B cell (primary cell): ENCODE measurements at regions of chr1 and their contacts with region 1.

Region 1: DNA sequence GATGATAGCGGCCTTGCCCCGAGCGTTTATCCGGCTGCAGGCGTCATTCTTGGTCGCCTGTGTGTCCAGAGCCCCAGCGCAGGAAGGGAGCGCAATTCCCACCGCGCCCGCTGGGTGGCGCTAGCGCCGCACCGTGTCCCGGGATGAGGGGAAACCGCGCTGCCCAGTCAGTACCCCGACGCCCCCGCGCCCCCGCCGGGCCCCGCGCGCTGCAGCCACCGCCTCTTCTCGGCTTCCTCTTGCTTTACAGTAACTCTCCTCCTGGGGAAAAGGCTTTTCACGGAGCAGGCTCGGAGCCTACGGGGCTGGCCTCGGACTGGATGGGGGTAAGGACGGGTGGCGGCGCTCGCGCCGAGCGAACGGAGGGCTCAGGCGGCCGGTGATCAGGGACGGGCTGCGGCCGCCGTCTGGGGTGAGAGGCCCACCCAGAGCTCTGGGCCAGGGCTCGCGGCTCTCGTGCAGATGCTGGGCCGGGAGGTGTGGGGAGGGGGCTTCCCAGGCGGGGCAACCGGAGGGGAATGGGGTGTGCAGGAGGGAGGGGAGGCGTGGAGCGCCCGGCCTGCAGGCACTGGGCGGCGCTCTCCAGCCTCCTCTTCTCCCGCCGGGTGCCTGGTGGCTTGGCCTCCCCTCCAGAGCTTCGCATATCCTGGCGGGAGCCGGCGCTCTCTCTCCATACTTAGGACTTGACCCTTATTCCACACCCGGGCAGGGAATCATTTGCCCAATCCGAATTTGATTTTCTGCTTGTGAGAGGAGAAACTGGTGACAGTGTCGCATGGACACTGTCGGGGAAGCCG is 29.8 kb downstream of the TEX35 start:
- DNase-seq: peak; percentile 93
- ATAC-seq: peak; percentile 80
- H3K4me3 ChIP-seq: peak overlapping the region; percentile 84 to 90 (median 88)
- H3K4me3 Mint-ChIP-seq: peak overlapping the region; percentile 99
- H3K27ac ChIP-seq: peak overlapping the region; percentile 55 to 61
- H3K27ac Mint-ChIP-seq: peak overlapping the region; percentile 98
- H3K4me1 ChIP-seq: peaks cover 36 to 46% of the 10 kb centered on the region in 2 donors
- H3K4me1 Mint-ChIP-seq: peaks cover 50% of the 10 kb centered on the region
- H3K27me3 ChIP-seq: no peaks in the 10 kb centered on the region
- H3K27me3 Mint-ChIP-seq: no peaks in the 10 kb centered on the region
- CTCF ChIP-seq: peak; percentile 99

Region 2: DNA sequence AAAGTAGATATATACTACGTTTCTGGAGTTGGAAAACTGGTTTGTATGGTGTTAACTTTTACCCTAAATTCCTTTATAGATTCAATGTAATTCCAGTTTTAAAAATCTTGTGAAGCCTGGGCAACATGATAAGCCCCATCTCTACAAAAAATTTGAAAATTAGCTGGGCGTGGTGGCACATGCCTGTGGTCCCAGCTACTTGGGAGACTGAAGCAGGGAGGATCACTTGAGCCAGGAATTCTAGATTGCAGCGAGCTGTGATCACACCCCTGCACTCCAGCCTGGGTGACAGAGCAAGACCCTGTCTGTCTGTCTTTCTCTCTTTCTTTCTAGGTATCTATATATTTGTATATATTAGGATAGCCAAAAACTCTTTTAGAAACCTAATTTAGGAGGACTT is 187.9 kb before region 1 on chr1:
- CTCF ChIA-PET with region 1: no interaction called
- POLR2A ChIA-PET with region 1: no interaction called
- intact Hi-C with region 1: no loop called
- DNase-seq: no peak
- ATAC-seq: no peak
- H3K4me3 ChIP-seq: no peak overlapping the region
- H3K4me3 Mint-ChIP-seq: no peak overlapping the region
- H3K27ac ChIP-seq: no peak overlapping the region
- H3K27ac Mint-ChIP-seq: no peak overlapping the region
- H3K4me1 ChIP-seq: no peaks in the 10 kb centered on the region
- H3K4me1 Mint-ChIP-seq: no peaks in the 10 kb centered on the region
- H3K27me3 ChIP-seq: no peaks in the 10 kb centered on the region
- H3K27me3 Mint-ChIP-seq: peaks cover 7% of the 10 kb centered on the region
- CTCF ChIP-seq: no peak

Region 3: DNA sequence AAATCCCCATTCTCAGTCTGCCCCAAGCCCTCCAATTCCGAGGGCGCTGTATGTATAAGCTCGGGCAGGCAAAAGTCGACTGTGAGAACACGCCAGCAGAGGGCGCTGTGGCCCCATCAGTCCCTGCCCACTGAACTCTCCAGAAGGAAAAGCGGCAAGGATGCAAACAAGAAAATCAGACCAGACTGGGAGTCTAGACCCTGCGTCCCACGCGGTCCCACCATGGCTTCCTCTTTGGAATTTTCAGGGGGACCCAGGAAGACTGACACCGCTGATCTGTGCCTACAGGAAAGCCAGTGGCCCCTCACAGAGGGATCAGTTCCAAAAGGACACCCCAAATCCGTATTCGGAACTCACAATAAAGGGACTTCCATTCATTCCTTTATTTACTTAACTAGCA is 10.4 kb before region 1 on chr1:
- CTCF ChIA-PET with region 1: interaction called, 17 read pairs
- POLR2A ChIA-PET with region 1: no interaction called
- intact Hi-C with region 1: no loop called
- DNase-seq: peak; percentile 87
- ATAC-seq: peak; percentile 90
- H3K4me3 ChIP-seq: no peak overlapping the region
- H3K4me3 Mint-ChIP-seq: no peak overlapping the region
- H3K27ac ChIP-seq: no peak overlapping the region
- H3K27ac Mint-ChIP-seq: no peak overlapping the region
- H3K4me1 ChIP-seq: peaks cover 0 to 9% of the 10 kb centered on the region in 2 donors
- H3K4me1 Mint-ChIP-seq: peaks cover 4% of the 10 kb centered on the region
- H3K27me3 ChIP-seq: no peaks in the 10 kb centered on the region
- H3K27me3 Mint-ChIP-seq: no peaks in the 10 kb centered on the region
- CTCF ChIP-seq: peak; percentile 98

Region 4: GRCh38 chr1:178599745-178600144 is 57.0 kb after region 1 on chr1:
- CTCF ChIA-PET with region 1: interaction called, 44 read pairs
- POLR2A ChIA-PET with region 1: interaction called, 4 read pairs
- intact Hi-C with region 1: no loop called
- DNase-seq: peak; percentile 51
- ATAC-seq: peak; percentile 62
- H3K4me3 ChIP-seq: peak overlapping the region in 1 of 5 experiments; percentile 0
- H3K4me3 Mint-ChIP-seq: peak overlapping the region; percentile 2
- H3K27ac ChIP-seq: peak overlapping the region; percentile 57 to 85
- H3K27ac Mint-ChIP-seq: peak overlapping the region; percentile 91
- H3K4me1 ChIP-seq: peaks cover 73 to 92% of the 10 kb centered on the region in 2 donors
- H3K4me1 Mint-ChIP-seq: peaks cover 84% of the 10 kb centered on the region
- H3K27me3 ChIP-seq: no peaks in the 10 kb centered on the region
- H3K27me3 Mint-ChIP-seq: no peaks in the 10 kb centered on the region
- CTCF ChIP-seq: no peak

Region 5: GRCh38 chr1:178733972-178734371 is 191.2 kb after region 1 on chr1:
- CTCF ChIA-PET with region 1: interaction called, 106 read pairs
- POLR2A ChIA-PET with region 1: interaction called, 9 read pairs
- intact Hi-C with region 1: no loop called
- DNase-seq: no peak
- ATAC-seq: no peak
- H3K4me3 ChIP-seq: no peak overlapping the region
- H3K4me3 Mint-ChIP-seq: peak overlapping the region; percentile 38
- H3K27ac ChIP-seq: peak overlapping the region in 1 of 2 donors; percentile 78
- H3K27ac Mint-ChIP-seq: peak overlapping the region; percentile 32
- H3K4me1 ChIP-seq: peaks cover 45 to 60% of the 10 kb centered on the region in 2 donors
- H3K4me1 Mint-ChIP-seq: peaks cover 65% of the 10 kb centered on the region
- H3K27me3 ChIP-seq: no peaks in the 10 kb centered on the region
- H3K27me3 Mint-ChIP-seq: no peaks in the 10 kb centered on the region
- CTCF ChIP-seq: peak; percentile 50

Region 6: DNA sequence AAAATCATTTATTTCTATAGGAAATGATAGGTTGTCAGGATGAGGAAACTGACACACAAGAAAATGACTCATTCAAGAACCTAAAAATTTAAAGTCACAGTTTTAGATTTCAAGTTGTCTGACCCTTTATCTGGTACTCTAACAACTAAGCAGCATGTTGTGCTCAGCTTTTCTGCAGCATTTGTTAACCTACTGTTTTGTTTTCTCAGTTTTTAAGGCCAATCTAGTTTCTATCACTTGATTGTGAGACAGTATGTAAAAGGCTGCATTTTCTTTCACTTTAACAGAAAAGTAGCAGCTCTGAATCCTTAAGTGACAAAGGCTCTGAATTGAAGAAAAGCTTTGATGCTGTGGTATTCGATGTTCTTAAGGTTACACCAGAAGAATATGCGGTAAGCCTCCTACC is 241.4 kb after region 1 on chr1:
- CTCF ChIA-PET with region 1: interaction called, 42 read pairs
- POLR2A ChIA-PET with region 1: interaction called, 3 read pairs
- intact Hi-C with region 1: loop called (anchors 2 kb)
- DNase-seq: no peak
- ATAC-seq: no peak
- H3K4me3 ChIP-seq: no peak overlapping the region
- H3K4me3 Mint-ChIP-seq: no peak overlapping the region
- H3K27ac ChIP-seq: peak overlapping the region in 1 of 2 donors; percentile 81
- H3K27ac Mint-ChIP-seq: peak overlapping the region; percentile 68
- H3K4me1 ChIP-seq: peaks cover 22 to 47% of the 10 kb centered on the region in 2 donors
- H3K4me1 Mint-ChIP-seq: peaks cover 69% of the 10 kb centered on the region
- H3K27me3 ChIP-seq: no peaks in the 10 kb centered on the region
- H3K27me3 Mint-ChIP-seq: no peaks in the 10 kb centered on the region
- CTCF ChIP-seq: no peak

Region 7: GRCh38 chr1:178898401-178898800 is 355.6 kb after region 1 on chr1:
- CTCF ChIA-PET with region 1: interaction called, 4 read pairs
- POLR2A ChIA-PET with region 1: no interaction called
- intact Hi-C with region 1: loop called (anchors 5 kb)
- DNase-seq: no peak
- ATAC-seq: no peak
- H3K4me3 ChIP-seq: no peak overlapping the region
- H3K4me3 Mint-ChIP-seq: no peak overlapping the region
- H3K27ac ChIP-seq: no peak overlapping the region
- H3K27ac Mint-ChIP-seq: peak overlapping the region; percentile 27
- H3K4me1 ChIP-seq: no peaks in the 10 kb centered on the region
- H3K4me1 Mint-ChIP-seq: peaks cover 18% of the 10 kb centered on the region
- H3K27me3 ChIP-seq: no peaks in the 10 kb centered on the region
- H3K27me3 Mint-ChIP-seq: no peaks in the 10 kb centered on the region
- CTCF ChIP-seq: no peak